ENCODE measurements at regions of chr1 and their contacts with region 1.

Region 1: GRCh38 chr1:170074250-170075157 is at the start of gene KIFAP3:
- DNase-seq: peak; percentile 99
- H3K4me3 ChIP-seq: peak within 1 kb of the TSS; percentile 89 to 94 (median 93)
- H3K27ac ChIP-seq: peak within 1 kb of the TSS; percentile 84
- H3K4me1 ChIP-seq: peaks cover 5% of the 10 kb centered on the region
- H3K27me3 ChIP-seq: no peaks in the 10 kb centered on the region
- CTCF ChIP-seq: peak; percentile 52 to 67
- total RNA-seq, gene KIFAP3: 28.8 to 33.9 TPM

Region 2: GRCh38 chr1:169964206-169964605 is 110.3 kb before region 1 on chr1:
- CTCF ChIA-PET with region 1: no interaction called
- dilution Hi-C with region 1: no loop called
- in situ Hi-C with region 1: loop called in 1 of 2 experiments (anchors 25 kb)
- intact Hi-C with region 1: no loop called
- DNase-seq: no peak
- H3K4me3 ChIP-seq: no peak overlapping the region
- H3K27ac ChIP-seq: no peak overlapping the region
- H3K4me1 ChIP-seq: no peaks in the 10 kb centered on the region
- H3K27me3 ChIP-seq: no peaks in the 10 kb centered on the region
- CTCF ChIP-seq: no peak

Region 3: GRCh38 chr1:170010443-170010842 is 64.1 kb before region 1 on chr1:
- CTCF ChIA-PET with region 1: no interaction called
- dilution Hi-C with region 1: no loop called
- in situ Hi-C with region 1: no loop called
- intact Hi-C with region 1: loop called (anchors 2 kb)
- DNase-seq: no peak
- H3K4me3 ChIP-seq: no peak overlapping the region
- H3K27ac ChIP-seq: no peak overlapping the region
- H3K4me1 ChIP-seq: no peaks in the 10 kb centered on the region
- H3K27me3 ChIP-seq: no peaks in the 10 kb centered on the region
- CTCF ChIP-seq: peak; percentile 6 to 48

Region 4: DNA sequence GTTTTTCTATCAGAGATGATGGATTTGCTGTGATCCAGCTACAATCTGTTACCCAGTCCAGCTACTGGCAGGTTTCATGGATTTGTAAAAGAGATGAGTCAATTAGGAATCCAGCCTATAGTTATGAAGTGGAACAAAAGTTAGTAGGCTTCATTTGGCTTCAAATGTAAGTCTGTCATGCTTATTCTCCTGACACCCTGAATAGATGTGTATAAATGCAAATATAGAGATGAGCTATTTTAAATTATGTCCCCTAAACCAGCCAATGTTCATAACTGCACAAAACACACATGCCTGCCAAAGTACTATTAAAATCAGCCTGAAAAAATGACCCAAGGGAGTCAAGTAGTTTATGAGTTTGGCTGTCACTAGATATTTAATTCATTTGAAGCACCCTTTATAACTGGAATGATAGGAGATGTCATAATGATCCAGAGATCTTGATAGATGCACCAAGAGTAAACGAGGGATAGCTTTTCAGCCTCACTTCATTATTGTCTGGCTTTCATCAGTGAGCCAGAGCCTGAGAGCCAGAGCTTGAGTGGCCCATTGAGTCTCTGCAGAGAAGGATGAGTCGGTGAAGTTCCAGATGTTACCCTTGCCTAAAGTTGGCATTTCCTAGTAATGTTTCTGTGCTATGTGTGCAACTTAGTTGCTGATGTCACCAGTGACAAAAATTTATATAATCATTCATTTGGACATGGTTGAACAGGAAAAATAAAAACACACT is 59.4 kb after region 1 on chr1:
- CTCF ChIA-PET with region 1: no interaction called
- dilution Hi-C with region 1: no loop called
- in situ Hi-C with region 1: no loop called
- intact Hi-C with region 1: no loop called
- DNase-seq: no peak
- H3K4me3 ChIP-seq: no peak overlapping the region
- H3K27ac ChIP-seq: no peak overlapping the region
- H3K4me1 ChIP-seq: no peaks in the 10 kb centered on the region
- H3K27me3 ChIP-seq: no peaks in the 10 kb centered on the region
- CTCF ChIP-seq: no peak